Astrocyte of the cerebellum (primary cell): ENCODE measurements at regions of chr11 and their contacts with region 1.

Region 1: GRCh38 chr11:116086426-116086825 is 582.2 kb upstream of the CADM1 start:
- DNase-seq: no peak
- H3K4me3 ChIP-seq: no peak overlapping the region
- CTCF ChIP-seq: no peak

Region 2: DNA sequence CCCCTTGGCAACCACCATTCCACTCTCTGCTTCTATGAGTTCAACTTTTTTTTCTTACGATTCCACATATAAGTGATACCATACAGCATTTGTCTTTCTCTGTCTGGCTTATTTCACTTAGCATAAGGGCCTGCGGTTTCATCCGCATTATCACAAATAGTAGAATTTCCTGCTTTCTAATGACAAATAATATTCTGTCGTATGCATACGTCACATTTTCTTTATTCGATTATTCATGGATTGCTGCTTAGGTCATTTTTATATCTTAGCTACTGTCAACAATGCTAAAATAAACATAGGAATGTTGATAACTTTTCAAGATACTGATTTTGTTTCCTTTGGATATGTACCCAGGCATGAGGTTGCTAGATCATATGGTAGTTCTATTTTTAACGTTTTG is 74.4 kb before region 1 on chr11:
- in situ Hi-C with region 1: no loop called
- DNase-seq: no peak
- H3K4me3 ChIP-seq: no peak overlapping the region
- CTCF ChIP-seq: no peak

Region 3: GRCh38 chr11:116189408-116190170 is 103.2 kb after region 1 on chr11:
- in situ Hi-C with region 1: loop called (anchors 5 kb)
- DNase-seq: no peak
- H3K4me3 ChIP-seq: no peak overlapping the region
- CTCF ChIP-seq: no peak